SK-N-SH (cell line): ENCODE measurements at regions of chr3 and their contacts with region 1.

Region 1: DNA sequence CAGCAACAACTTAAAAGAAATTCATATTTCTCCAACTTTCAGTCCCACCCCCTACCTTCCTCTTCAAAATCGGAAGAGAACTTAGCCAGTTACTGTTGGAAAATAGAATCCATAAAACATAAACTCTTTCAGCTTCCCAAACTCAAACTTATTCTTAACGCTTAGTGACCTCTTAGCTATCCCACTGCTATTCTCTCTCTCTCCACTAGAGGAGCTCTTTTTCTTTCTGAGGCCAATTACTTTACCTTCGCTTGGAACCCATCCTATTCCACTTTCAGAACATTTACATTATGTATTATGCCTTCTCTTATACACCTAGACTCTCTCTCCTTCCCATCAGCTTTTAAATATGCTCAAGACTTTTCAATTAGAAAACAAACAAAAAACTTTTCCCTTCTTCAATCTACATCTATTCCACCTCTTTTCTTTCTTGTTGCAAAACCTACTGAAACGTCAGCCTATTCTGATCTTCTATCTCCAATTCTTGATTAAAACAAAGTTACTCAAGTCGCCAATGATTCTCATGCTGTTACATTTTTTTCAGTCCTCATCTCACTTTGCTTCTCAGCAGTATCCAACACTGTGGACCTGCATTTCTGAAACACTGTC is 13.4 kb upstream of the GHSR start:
- DNase-seq: peak; percentile 55
- H3K4me3 ChIP-seq: no peak overlapping the region
- H3K27ac ChIP-seq: no peak overlapping the region
- H3K4me1 ChIP-seq: no peaks in the 10 kb centered on the region
- H3K27me3 ChIP-seq: no peaks in the 10 kb centered on the region
- CTCF ChIP-seq: peak; percentile 89
- EP300 ChIP-seq: no peak
- RAD21 ChIP-seq: peak; percentile 60

Region 2: GRCh38 chr3:172115787-172116186 is 345.8 kb before region 1 on chr3:
- CTCF ChIA-PET with region 1: no interaction called
- POLR2A ChIA-PET with region 1: no interaction called
- DNase-seq: no peak
- H3K4me3 ChIP-seq: no peak overlapping the region
- H3K27ac ChIP-seq: peak overlapping the region; percentile 17 to 64; a peak in 3 of 4 replicates
- H3K4me1 ChIP-seq: peaks cover 0 to 16% of the 10 kb centered on the region in 2 experiments; a peak in 3 of 4 replicates
- H3K27me3 ChIP-seq: no peaks in the 10 kb centered on the region
- CTCF ChIP-seq: no peak
- EP300 ChIP-seq: no peak; a peak in 1 of 4 replicates
- RAD21 ChIP-seq: no peak

Region 3: GRCh38 chr3:172449466-172450149 is 12.0 kb before region 1 on chr3:
- CTCF ChIA-PET with region 1: interaction called, 18 read pairs
- POLR2A ChIA-PET with region 1: no interaction called
- DNase-seq: peak; percentile 50
- H3K4me3 ChIP-seq: peak overlapping the region; percentile 24 to 45; a peak in 2 of 4 replicates
- H3K27ac ChIP-seq: no peak overlapping the region
- H3K4me1 ChIP-seq: peaks cover 0 to 13% of the 10 kb centered on the region in 2 experiments; a peak in 1 of 4 replicates
- H3K27me3 ChIP-seq: peaks cover 26% of the 10 kb centered on the region
- CTCF ChIP-seq: no peak
- EP300 ChIP-seq: no peak
- RAD21 ChIP-seq: no peak

Region 4: GRCh38 chr3:172476347-172476746 is 14.7 kb after region 1 on chr3:
- CTCF ChIA-PET with region 1: interaction called, 27 read pairs
- POLR2A ChIA-PET with region 1: no interaction called
- DNase-seq: no peak
- H3K4me3 ChIP-seq: peak overlapping the region in 1 of 2 experiments; percentile 70; a peak in 3 of 4 replicates
- H3K27ac ChIP-seq: no peak overlapping the region
- H3K4me1 ChIP-seq: no peaks in the 10 kb centered on the region; a peak in 1 of 4 replicates
- H3K27me3 ChIP-seq: no peaks in the 10 kb centered on the region
- CTCF ChIP-seq: no peak
- EP300 ChIP-seq: no peak
- RAD21 ChIP-seq: no peak